RWPE1 (cell line): ENCODE measurements at regions of chr20 and their contacts with region 1.

Region 1: GRCh38 chr20:47663333-47664067 is 121.8 kb downstream of the SULF2 start:
- DNase-seq: peak; percentile 95
- H3K27ac ChIP-seq: peak overlapping the region; percentile 89
- CTCF ChIP-seq: peak; percentile 100

Region 2: GRCh38 chr20:47648943-47649342 is 14.6 kb before region 1 on chr20:
- CTCF ChIA-PET with region 1: interaction called, 22 read pairs
- POLR2A ChIA-PET with region 1: no interaction called
- DNase-seq: no peak
- H3K27ac ChIP-seq: peak overlapping the region; percentile 41
- CTCF ChIP-seq: no peak

Region 3: GRCh38 chr20:47677635-47678453 is 14.3 kb after region 1 on chr20:
- CTCF ChIA-PET with region 1: interaction called, 11 read pairs
- POLR2A ChIA-PET with region 1: no interaction called
- DNase-seq: peak; percentile 93
- H3K27ac ChIP-seq: peak overlapping the region; percentile 61
- CTCF ChIP-seq: peak; percentile 95

Region 4: GRCh38 chr20:47691625-47692024 is 28.1 kb after region 1 on chr20:
- CTCF ChIA-PET with region 1: interaction called, 11 read pairs
- POLR2A ChIA-PET with region 1: no interaction called
- DNase-seq: no peak
- H3K27ac ChIP-seq: no peak overlapping the region
- CTCF ChIP-seq: no peak

Region 5: GRCh38 chr20:47857566-47858471 is 194.3 kb after region 1 on chr20:
- CTCF ChIA-PET with region 1: no interaction called
- POLR2A ChIA-PET with region 1: no interaction called
- DNase-seq: no peak
- H3K27ac ChIP-seq: peak overlapping the region; percentile 54
- CTCF ChIP-seq: no peak